Activated CD4-positive, alpha-beta memory T cell treated with anti-CD3 and anti-CD28 coated beads for 36 hours (primary cell): ENCODE measurements at regions of chr6 and their contacts with region 1.

Region 1: DNA sequence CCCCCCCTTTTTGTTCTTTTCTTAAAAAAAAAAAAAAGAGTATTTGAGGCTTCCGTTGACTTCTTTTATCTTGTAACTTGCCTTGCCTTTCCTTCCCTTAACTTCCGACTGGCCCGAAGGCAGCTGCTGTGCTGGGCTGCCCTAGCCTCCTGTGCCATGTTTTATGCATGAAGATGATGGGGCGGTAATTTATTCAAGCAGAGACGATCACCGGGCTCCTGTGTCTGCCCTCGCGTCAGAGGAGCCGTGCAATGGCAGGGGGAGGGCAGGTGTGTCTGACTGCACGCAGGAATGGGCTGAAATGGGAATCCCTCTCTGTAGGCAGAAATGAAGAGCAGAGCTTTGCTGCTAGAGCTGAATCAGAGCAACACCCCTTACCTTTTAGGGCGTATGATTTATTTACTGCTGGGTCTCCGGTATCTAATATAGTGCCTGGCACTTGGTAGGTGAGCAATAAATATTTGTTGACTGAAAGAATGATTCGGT is 106.3 kb upstream of the RIPOR2 start:
- DNase-seq: peak; percentile 69
- H3K4me3 Mint-ChIP-seq: peak overlapping the region; percentile 91
- H3K27ac Mint-ChIP-seq: peak overlapping the region; percentile 97
- H3K4me1 Mint-ChIP-seq: peaks cover 60% of the 10 kb centered on the region
- H3K27me3 Mint-ChIP-seq: no peaks in the 10 kb centered on the region

Region 2: DNA sequence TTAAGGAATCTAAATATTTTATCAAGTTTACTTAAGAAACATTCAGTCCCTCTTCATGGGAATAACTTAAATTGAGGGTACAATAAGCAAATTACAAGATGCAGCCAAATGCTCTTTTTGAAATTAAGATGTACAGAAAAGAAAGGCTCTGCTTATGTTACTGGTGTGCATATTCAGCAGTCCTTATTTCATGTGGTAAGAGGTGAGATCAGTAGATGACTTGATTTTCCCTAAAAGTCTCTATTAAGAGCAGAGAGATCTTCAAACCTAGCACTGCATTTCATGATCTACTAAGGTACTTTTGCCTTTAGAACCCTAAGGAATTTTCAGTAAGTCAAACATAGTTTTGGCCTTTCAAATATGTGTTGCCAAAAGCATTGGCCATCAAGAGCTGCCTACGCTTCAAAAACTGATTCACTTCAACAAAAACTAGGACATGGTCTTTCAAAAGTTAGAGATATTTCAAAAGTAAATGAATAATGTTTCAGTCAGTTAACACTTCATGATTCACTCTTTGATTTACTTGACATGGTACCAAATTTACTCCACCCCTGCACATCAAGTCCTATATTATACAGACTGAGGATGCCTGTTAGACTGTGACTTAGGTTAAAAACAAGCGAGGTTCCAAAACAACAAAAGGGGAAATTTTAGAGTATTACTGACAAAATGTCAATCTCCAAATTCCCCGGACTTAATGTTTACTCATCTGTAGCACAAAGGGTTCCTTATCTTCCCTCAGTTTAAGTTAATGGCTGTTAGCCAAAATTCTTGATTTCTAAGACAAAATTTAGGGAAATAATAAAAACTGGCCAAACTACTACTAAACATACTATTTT is 342.3 kb before region 1 on chr6:
- CTCF ChIA-PET with region 1: no interaction called
- POLR2A ChIA-PET with region 1: no interaction called
- intact Hi-C with region 1: no loop called
- DNase-seq: no peak
- H3K4me3 Mint-ChIP-seq: no peak overlapping the region
- H3K27ac Mint-ChIP-seq: peak overlapping the region; percentile 88
- H3K4me1 Mint-ChIP-seq: peaks cover 61% of the 10 kb centered on the region
- H3K27me3 Mint-ChIP-seq: no peaks in the 10 kb centered on the region

Region 3: DNA sequence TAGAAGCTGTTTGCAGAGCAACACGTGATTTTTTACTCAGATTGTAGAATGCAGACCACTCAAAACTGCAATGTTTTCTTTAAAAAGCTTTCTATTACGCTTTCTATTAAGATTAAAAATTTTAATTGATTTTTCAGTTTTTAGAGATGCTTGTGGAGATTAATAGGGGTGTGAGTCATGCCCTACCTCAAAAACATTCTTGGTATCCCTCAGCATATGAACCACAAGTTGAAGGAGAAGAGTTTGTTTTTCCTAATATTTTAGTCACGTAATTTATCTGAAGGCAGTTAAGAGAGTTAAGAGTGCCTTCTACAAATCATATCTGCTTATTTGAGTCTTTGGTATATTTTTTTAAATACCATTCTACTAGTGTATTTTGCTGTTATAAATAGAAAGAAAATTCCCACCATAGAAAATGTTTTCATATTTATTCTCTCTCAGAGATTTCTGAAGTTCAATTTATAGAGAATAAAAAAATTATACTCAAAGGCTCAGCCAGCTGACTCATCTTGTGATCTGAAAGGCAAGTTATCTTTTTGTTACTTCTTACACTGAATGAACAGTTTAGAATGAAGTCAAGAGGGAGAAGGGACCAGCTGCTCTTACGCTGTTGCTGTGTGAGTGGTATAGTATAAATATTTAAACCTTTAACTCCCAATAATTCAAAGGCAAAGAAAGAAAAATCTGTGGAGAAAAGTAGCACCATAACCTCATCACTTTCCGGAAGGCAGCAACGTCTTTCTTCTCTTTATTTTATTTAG is 113.9 kb before region 1 on chr6:
- CTCF ChIA-PET with region 1: interaction called, 5 read pairs
- POLR2A ChIA-PET with region 1: no interaction called
- intact Hi-C with region 1: loop called (anchors 1 kb)
- DNase-seq: no peak
- H3K4me3 Mint-ChIP-seq: peak overlapping the region; percentile 80
- H3K27ac Mint-ChIP-seq: peak overlapping the region; percentile 97
- H3K4me1 Mint-ChIP-seq: peaks cover 81% of the 10 kb centered on the region
- H3K27me3 Mint-ChIP-seq: peaks cover 2% of the 10 kb centered on the region

Region 4: DNA sequence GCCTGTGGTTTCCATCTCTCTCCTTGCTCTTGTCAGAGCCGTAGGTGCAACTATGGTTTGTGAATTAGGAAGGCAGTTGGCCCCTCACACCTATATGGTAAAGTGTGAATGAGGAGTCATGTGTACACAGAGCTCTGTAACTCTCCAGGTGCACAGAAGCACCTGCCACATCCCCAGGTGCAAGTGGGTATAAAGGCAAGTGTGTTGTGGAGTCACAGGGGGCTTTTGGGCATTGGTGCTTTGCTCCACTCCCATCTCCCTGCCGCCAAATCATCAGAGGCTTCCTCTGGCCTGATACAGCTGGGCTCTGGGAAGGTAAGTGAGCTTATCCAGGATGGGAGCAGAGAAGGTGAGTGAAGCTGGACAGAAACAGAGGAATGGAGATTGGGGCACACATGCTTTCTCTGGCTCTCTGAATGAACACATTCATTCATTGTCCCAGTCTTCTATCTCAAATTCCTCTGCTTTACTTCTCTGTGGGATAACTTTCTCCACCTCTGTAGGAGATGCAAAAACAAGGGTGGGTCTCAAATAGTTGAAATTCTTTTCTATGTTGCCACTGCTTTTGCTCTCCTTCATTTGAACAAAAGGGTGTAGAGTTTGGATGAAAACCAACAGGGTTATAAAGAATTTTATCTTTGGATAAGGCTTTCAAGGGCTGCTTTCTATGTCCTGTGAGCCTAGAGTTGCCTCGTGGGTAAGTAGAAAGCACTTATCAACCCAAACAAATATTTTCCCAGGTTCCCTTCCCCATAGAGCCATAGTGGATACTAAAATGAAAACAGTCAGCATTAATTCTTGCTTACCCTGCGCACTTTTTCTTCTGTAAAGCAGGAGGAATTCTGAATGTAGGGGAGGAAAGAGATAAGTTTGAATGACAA is 61.3 kb before region 1 on chr6:
- CTCF ChIA-PET with region 1: no interaction called
- POLR2A ChIA-PET with region 1: no interaction called
- intact Hi-C with region 1: no loop called
- DNase-seq: no peak
- H3K4me3 Mint-ChIP-seq: no peak overlapping the region
- H3K27ac Mint-ChIP-seq: no peak overlapping the region
- H3K4me1 Mint-ChIP-seq: peaks cover 60% of the 10 kb centered on the region
- H3K27me3 Mint-ChIP-seq: no peaks in the 10 kb centered on the region

Region 5: DNA sequence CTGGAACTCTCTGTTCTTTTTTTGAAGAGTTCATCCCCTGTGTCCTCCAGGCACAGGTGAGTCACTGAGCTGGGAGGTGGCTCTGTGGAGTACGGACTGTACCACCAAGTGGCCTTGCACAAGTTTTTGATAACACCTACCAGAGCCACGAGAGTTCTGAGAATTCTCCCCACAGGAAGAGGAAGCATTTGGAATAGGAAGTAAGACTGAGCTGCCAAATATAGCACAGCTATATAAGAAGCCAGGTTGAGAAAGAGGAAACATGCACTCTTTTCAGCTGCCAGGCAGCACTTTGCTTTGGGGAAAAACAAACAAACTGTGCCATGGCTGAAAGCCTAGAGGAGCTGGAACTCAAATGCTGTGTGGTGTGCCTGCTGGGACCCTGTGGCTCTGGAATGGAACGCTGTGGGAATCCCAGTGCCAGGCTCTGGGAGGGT is 35.5 kb before region 1 on chr6:
- CTCF ChIA-PET with region 1: no interaction called
- POLR2A ChIA-PET with region 1: no interaction called
- intact Hi-C with region 1: loop called (anchors 1 kb)
- DNase-seq: peak; percentile 66
- H3K4me3 Mint-ChIP-seq: peak overlapping the region; percentile 10
- H3K27ac Mint-ChIP-seq: peak overlapping the region; percentile 78
- H3K4me1 Mint-ChIP-seq: peaks cover 77% of the 10 kb centered on the region
- H3K27me3 Mint-ChIP-seq: no peaks in the 10 kb centered on the region

Region 6: DNA sequence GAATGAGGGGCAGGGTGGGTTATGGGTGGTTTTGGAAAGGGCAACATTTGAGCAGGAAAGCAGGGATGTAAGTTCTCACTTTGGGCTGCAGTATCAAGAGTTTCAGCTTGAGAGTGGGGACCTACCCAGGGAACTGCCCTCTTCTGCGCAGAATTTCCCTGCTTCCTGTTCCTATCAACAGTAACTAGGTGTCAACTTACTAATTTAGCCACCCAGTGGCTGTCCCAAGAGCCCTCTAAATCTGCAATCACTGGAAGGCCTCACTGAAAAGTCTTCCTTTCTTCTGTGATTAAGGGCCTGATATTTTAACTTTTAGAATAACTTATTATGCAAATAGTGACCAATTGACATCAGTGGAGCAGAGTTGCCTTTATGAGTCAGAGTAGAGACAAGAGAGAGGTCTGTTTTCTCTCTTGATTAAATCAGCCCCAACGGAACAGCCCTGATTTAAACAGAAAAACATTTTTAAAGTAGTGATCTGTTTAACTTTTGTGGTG is 11.8 kb after region 1 on chr6:
- CTCF ChIA-PET with region 1: interaction called, 11 read pairs
- POLR2A ChIA-PET with region 1: interaction called, 8 read pairs
- intact Hi-C with region 1: loop called (anchors 1 kb)
- DNase-seq: peak; percentile 50
- H3K4me3 Mint-ChIP-seq: peak overlapping the region; percentile 9
- H3K27ac Mint-ChIP-seq: peak overlapping the region; percentile 80
- H3K4me1 Mint-ChIP-seq: peaks cover 82% of the 10 kb centered on the region
- H3K27me3 Mint-ChIP-seq: no peaks in the 10 kb centered on the region